Activated naive CD4-positive, alpha-beta T cell treated with anti-CD3 and anti-CD28 coated beads for 36 hours (primary cell): ENCODE measurements at regions of chr17 and their contacts with region 1.

Region 1: GRCh38 chr17:27609611-27610303 is 21.2 kb upstream of the LGALS9 start:
- DNase-seq: peak; percentile 41
- H3K4me3 Mint-ChIP-seq: no peak overlapping the region
- H3K27ac Mint-ChIP-seq: no peak overlapping the region
- H3K4me1 Mint-ChIP-seq: peaks cover 24% of the 10 kb centered on the region
- H3K27me3 Mint-ChIP-seq: no peaks in the 10 kb centered on the region

Region 2: DNA sequence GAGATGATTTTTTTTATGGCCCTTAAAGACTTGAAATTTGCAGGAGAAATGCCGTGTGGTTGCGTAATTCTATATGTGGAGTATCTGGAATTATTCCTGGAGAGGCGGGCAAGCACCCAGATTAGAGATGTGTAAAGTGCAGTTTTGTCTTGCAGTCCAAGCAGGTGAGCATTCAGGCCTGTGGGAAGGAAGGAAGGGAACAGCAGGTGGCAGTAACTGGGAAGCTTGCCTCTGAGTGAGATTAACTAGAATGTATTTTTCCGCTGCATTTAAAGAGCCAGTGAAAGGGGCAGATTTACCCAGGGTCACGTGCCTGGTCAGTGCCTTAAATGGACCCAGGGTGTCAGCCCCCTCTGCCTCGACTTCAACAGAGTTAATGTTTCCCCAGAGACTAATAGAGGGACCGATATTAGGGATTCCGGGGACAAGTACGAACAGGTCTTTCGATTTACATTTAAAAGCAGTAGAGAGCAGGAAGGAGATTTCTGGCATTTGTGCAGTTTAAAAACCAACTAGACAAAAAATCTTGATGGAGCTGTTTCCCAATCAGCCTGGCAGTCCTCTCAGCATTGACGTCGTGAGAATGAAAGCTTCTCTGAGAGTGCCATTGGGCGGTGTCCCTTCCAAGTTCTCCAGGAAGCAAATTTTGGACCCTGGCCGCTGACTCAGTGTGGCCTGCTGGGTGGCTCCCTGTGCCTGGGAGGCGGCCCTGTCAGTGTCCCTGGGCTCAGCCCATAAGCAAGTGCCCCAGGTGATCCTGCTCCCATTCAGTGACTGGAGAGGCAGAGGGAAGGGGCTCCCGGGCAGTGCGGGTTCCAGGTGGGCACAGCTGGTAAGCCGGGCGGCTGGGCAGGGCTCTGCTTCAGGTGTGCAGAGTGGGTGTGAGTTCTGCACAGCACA is 115.3 kb before region 1 on chr17:
- CTCF ChIA-PET with region 1: no interaction called
- intact Hi-C with region 1: no loop called
- DNase-seq: no peak
- H3K4me3 Mint-ChIP-seq: no peak overlapping the region
- H3K27ac Mint-ChIP-seq: no peak overlapping the region
- H3K4me1 Mint-ChIP-seq: peaks cover 40% of the 10 kb centered on the region
- H3K27me3 Mint-ChIP-seq: no peaks in the 10 kb centered on the region

Region 3: DNA sequence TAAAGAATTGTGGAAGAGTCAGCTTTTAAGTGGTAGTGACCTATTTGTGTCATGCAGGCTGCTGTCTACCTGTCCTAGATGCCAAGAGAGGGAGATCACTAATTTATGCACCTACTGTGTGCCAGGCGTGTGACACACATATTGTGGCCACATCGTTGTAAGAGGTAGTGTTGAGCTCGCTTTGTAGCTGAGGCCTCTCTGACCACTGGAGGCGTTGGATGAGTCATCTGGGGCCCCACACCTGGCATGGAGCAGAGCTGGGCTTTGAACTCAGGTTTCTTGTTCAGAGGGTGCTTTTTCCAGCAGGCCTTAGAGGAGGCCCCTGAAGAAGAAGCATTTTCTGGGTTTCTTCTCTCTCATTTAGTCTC is 31.1 kb before region 1 on chr17:
- CTCF ChIA-PET with region 1: no interaction called
- intact Hi-C with region 1: no loop called
- DNase-seq: peak; percentile 93
- H3K4me3 Mint-ChIP-seq: no peak overlapping the region
- H3K27ac Mint-ChIP-seq: peak overlapping the region; percentile 93
- H3K4me1 Mint-ChIP-seq: peaks cover 67% of the 10 kb centered on the region
- H3K27me3 Mint-ChIP-seq: no peaks in the 10 kb centered on the region

Region 4: GRCh38 chr17:27620721-27621120 is 11.0 kb after region 1 on chr17:
- CTCF ChIA-PET with region 1: interaction called, 4 read pairs
- intact Hi-C with region 1: loop called (anchors 1 kb)
- DNase-seq: peak; percentile 65
- H3K4me3 Mint-ChIP-seq: no peak overlapping the region
- H3K27ac Mint-ChIP-seq: peak overlapping the region; percentile 51
- H3K4me1 Mint-ChIP-seq: peaks cover 36% of the 10 kb centered on the region
- H3K27me3 Mint-ChIP-seq: no peaks in the 10 kb centered on the region

Region 5: GRCh38 chr17:27630607-27631410 is 21.1 kb after region 1 on chr17 and contains the start of gene LGALS9:
- CTCF ChIA-PET with region 1: interaction called, 9 read pairs
- intact Hi-C with region 1: loop called (anchors 2 kb)
- DNase-seq: peak; percentile 61
- H3K4me3 Mint-ChIP-seq: peak within 1 kb of the TSS; percentile 81
- H3K27ac Mint-ChIP-seq: peak within 1 kb of the TSS; percentile 80
- H3K4me1 Mint-ChIP-seq: peaks cover 47% of the 10 kb centered on the region
- H3K27me3 Mint-ChIP-seq: no peaks in the 10 kb centered on the region
- total RNA-seq, gene LGALS9: 80.2 to 81.1 TPM